ENCODE measurements at regions of chr6 and their contacts with region 1.

Region 1: GRCh38 chr6:44074439-44075136 is 52.7 kb downstream of the MRPL14 start:
- DNase-seq: peak; percentile 91
- H3K4me3 Mint-ChIP-seq: peak overlapping the region; percentile 93
- H3K27ac Mint-ChIP-seq: peak overlapping the region; percentile 96
- H3K4me1 Mint-ChIP-seq: peaks cover 32% of the 10 kb centered on the region
- H3K27me3 Mint-ChIP-seq: peaks cover 5% of the 10 kb centered on the region

Region 2: DNA sequence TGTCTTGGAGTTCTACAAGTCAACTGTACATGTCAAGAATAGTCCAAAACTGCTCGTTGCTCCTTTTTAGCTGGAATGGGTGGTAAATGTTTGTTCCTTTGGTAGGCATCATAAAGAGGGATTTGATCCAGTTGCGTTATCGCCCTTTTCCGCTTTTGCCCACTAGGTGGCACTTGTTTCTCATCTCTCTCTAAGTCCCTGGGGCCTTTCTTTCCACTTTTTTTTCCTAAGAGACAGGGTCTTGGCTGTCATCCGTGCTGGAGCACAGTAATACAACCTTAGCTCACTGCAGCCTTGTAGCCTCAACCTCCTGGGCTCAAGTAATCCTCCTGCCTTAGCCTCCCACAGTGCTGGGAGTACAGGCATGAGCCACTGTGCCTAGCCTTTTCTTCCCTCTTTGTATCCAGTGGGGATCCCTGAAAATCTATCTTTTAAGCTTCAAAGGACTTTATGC is 466.3 kb before region 1 on chr6:
- intact Hi-C with region 1: loop called (anchors 1 kb)
- DNase-seq: peak; percentile 87
- H3K4me3 Mint-ChIP-seq: no peak overlapping the region
- H3K27ac Mint-ChIP-seq: no peak overlapping the region
- H3K4me1 Mint-ChIP-seq: peaks cover 7% of the 10 kb centered on the region
- H3K27me3 Mint-ChIP-seq: no peaks in the 10 kb centered on the region

Region 3: GRCh38 chr6:43667245-43668150 is 407.1 kb before region 1 on chr6:
- intact Hi-C with region 1: loop called (anchors 1 kb)
- DNase-seq: peak; percentile 95
- H3K4me3 Mint-ChIP-seq: peak overlapping the region; percentile 52
- H3K27ac Mint-ChIP-seq: peak overlapping the region; percentile 76
- H3K4me1 Mint-ChIP-seq: peaks cover 45% of the 10 kb centered on the region
- H3K27me3 Mint-ChIP-seq: no peaks in the 10 kb centered on the region

Region 4: DNA sequence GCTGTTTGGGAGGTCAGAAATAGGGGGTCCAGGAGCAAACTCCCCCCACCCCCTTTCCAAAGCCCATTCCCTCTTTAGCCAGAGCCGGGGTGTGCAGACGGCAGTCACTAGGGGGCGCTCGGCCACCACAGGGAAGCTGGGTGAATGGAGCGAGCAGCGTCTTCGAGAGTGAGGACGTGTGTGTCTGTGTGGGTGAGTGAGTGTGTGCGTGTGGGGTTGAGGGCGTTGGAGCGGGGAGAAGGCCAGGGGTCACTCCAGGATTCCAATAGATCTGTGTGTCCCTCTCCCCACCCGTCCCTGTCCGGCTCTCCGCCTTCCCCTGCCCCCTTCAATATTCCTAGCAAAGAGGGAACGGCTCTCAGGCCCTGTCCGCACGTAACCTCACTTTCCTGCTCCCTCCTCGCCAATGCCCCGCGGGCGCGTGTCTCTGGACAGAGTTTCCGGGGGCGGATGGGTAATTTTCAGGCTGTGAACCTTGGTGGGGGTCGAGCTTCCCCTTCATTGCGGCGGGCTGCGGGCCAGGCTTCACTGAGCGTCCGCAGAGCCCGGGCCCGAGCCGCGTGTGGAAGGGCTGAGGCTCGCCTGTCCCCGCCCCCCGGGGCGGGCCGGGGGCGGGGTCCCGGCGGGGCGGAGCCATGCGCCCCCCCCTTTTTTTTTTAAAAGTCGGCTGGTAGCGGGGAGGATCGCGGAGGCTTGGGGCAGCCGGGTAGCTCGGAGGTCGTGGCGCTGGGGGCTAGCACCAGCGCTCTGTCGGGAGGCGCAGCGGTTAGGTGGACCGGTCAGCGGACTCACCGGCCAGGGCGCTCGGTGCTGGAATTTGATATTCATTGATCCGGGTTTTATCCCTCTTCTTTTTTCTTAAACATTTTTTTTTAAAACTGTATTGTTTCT is 304.8 kb before region 1 on chr6 and contains the start of gene VEGFA:
- intact Hi-C with region 1: loop called (anchors 1 kb)
- DNase-seq: peak; percentile 97
- H3K4me3 Mint-ChIP-seq: peak within 1 kb of the TSS; percentile 92
- H3K27ac Mint-ChIP-seq: peak within 1 kb of the TSS; percentile 80
- H3K4me1 Mint-ChIP-seq: peaks cover 25% of the 10 kb centered on the region
- H3K27me3 Mint-ChIP-seq: peaks cover 3% of the 10 kb centered on the region
- total RNA-seq, gene VEGFA: 62.9 and 64.6 TPM in 2 replicates

Region 5: GRCh38 chr6:44028789-44029310 is 45.7 kb before region 1 on chr6:
- intact Hi-C with region 1: no loop called
- DNase-seq: no peak
- H3K4me3 Mint-ChIP-seq: no peak overlapping the region
- H3K27ac Mint-ChIP-seq: no peak overlapping the region
- H3K4me1 Mint-ChIP-seq: peaks cover 3% of the 10 kb centered on the region
- H3K27me3 Mint-ChIP-seq: peaks cover 20% of the 10 kb centered on the region

Region 6: GRCh38 chr6:44049163-44049988 is 25.2 kb before region 1 on chr6:
- intact Hi-C with region 1: loop called (anchors 1 kb)
- DNase-seq: peak; percentile 79
- H3K4me3 Mint-ChIP-seq: peak overlapping the region; percentile 31
- H3K27ac Mint-ChIP-seq: peak overlapping the region; percentile 82
- H3K4me1 Mint-ChIP-seq: peaks cover 15% of the 10 kb centered on the region
- H3K27me3 Mint-ChIP-seq: no peaks in the 10 kb centered on the region

Region 7: GRCh38 chr6:44086931-44087574 is 12.5 kb after region 1 on chr6:
- intact Hi-C with region 1: no loop called
- DNase-seq: no peak
- H3K4me3 Mint-ChIP-seq: no peak overlapping the region
- H3K27ac Mint-ChIP-seq: no peak overlapping the region
- H3K4me1 Mint-ChIP-seq: peaks cover 2% of the 10 kb centered on the region
- H3K27me3 Mint-ChIP-seq: no peaks in the 10 kb centered on the region

Measured in activated CD4-positive, alpha-beta T cell treated with anti-CD3 and anti-CD28 coated beads, Interleukin-2, amount 10 ng/mL, durations not matched to agents 24 days and 14 days (primary cell).